ENCODE measurements at regions of chr11 and their contacts with region 1.

Region 1: DNA sequence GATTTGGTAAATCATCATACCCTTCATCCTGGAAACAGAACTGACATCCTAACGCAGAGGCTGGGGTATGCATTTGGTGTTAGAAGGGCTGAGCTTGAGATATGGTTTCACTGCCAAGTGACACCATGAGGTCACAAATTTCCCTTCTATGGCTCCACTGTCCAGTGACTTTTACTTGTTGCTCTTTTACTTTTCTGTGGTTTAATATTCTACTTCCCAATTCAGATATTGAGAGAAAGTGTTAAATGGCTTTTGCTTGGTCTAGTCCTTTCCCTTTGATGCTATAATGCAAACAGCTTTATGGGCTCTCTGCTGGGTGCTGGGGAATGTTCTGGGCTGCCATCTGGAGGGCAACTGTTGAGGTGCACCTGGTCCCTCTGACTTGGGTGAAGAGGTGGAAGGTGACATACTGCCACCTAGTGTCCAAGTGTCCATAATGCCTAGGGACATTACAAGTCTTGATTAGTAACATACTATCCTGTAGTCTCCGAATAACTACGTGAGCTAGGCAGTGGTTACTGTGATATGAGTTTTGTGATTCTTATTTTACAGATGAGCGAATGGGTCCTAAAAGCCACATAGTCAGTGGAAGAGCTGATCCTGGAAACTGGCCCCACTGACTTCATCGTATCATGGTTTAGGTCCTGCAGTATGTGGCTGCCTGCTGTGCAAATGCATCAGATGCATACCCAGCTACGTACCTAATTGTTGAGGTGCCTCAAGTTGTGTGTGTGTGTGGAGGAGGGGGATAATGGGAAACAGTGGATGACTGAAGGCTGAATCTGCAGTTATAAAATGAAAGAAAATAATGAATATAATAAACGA is 149.1 kb upstream of the RAG2 start:
- DNase-seq: peak; percentile 37
- H3K4me3 ChIP-seq: no peak overlapping the region
- H3K27me3 ChIP-seq: no peaks in the 10 kb centered on the region
- CTCF ChIP-seq: peak; percentile 99

Region 2: GRCh38 chr11:36693139-36693843 is 53.8 kb before region 1 on chr11:
- CTCF ChIA-PET with region 1: interaction called, 18 read pairs
- POLR2A ChIA-PET with region 1: no interaction called
- DNase-seq: no peak
- H3K4me3 ChIP-seq: no peak overlapping the region
- H3K27me3 ChIP-seq: peaks cover 7% of the 10 kb centered on the region; the same call in 1 of the 2 replicates
- CTCF ChIP-seq: no peak

Region 3: DNA sequence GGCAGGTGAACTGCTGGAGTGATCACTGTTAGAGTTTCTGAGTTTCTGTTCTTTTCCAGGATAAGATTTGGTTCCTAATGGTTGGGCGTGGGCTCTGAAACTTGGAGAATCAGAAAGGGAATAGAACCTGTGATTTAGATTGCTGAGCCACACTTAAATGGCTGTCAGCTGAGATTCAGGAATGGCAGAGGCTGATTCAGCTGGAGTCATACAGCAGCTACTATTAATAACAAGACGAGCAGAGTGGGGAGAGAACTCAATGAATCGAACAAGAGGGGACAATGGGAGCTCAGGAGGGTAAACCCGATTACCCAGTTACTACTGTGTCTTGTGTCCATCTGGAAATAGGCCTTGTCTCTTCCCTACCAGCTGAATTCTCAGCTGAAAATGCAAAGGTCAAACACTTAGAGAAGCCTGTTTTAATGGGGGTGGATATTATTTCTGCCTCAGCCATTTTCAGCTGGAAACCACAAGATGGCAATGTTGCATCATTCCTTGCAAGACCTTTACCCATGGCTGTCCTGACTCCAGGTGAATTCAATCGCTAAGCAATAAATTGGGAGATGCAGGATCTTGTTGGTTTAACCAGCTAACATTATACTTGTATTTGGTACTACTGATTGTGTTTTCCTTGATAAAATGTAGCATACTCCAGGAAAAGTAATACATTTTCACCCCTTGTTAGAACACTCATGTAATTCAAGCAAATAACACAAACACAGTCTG is 44.6 kb before region 1 on chr11:
- CTCF ChIA-PET with region 1: interaction called, 67 read pairs
- POLR2A ChIA-PET with region 1: no interaction called
- DNase-seq: peak; percentile 5
- H3K4me3 ChIP-seq: no peak overlapping the region
- H3K27me3 ChIP-seq: no peaks in the 10 kb centered on the region; the same call in 1 of the 2 replicates
- CTCF ChIP-seq: peak; percentile 76

Region 4: DNA sequence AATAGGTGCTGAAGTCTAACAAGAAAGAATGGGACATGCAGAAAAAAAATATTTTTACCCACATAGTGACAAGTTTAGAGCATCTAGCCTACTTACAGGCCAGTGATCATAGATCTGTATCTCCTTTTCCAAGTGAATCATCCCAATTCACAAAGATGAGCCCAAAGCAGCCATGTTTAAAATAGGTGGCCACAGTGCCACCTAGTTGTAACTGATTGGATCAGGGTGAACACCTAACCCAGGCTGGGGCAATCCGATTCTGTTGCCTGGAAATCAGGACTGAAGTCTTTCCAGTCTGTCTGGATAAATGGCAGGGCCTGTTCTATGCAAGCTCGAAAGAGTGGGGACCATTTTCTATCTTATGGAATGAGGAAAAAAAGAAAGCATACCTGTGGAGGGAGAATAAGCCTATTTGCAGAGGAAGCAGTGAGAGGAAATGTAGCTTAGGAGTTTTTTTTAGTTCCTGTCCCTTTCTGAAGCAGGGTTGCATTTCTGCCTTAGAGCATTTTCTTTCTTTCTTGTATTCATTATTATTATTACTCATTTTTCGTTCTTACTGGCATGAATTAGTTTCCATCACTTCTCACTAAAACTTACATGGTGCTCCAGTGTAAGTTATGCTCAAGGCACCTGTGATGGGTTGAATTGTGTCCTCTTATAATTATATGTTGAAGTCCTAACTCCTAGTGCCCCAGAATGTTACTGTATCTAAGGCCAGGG is 35.8 kb before region 1 on chr11:
- CTCF ChIA-PET with region 1: interaction called, 22 read pairs
- POLR2A ChIA-PET with region 1: no interaction called
- DNase-seq: no peak
- H3K4me3 ChIP-seq: no peak overlapping the region
- H3K27me3 ChIP-seq: no peaks in the 10 kb centered on the region
- CTCF ChIP-seq: no peak

Region 5: GRCh38 chr11:36718451-36718850 is 28.6 kb before region 1 on chr11:
- CTCF ChIA-PET with region 1: interaction called, 10 read pairs
- POLR2A ChIA-PET with region 1: no interaction called
- DNase-seq: no peak
- H3K4me3 ChIP-seq: no peak overlapping the region
- H3K27me3 ChIP-seq: no peaks in the 10 kb centered on the region
- CTCF ChIP-seq: no peak

Region 6: DNA sequence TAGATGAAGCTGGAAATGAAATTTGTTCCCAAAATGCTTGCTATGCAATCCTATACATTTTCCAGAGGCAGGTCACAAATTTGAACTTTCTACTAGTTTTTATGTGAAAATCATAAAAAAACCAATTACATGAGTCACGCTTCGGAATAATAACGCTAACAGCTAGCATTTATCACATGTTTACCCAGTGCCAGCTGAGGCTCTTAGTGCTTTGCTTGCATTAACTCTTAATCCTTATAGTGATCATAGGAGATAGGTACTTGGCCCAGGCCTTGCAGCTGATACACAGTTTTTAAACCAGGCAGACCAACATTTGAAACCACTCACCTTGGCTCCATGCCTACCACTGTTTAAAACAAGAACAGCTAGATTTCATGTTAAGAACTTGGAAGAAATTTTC is 17.3 kb before region 1 on chr11:
- CTCF ChIA-PET with region 1: interaction called, 52 read pairs
- POLR2A ChIA-PET with region 1: no interaction called
- DNase-seq: no peak
- H3K4me3 ChIP-seq: no peak overlapping the region
- H3K27me3 ChIP-seq: no peaks in the 10 kb centered on the region
- CTCF ChIP-seq: no peak

Measured in BJ (cell line).